PC-9 (cell line): ENCODE measurements at regions of chr11 and their contacts with region 1.

Region 1: GRCh38 chr11:86021377-86021776 is 47.5 kb downstream of the PICALM start:
- DNase-seq: no peak
- H3K4me3 ChIP-seq: no peak overlapping the region
- H3K27ac ChIP-seq: no peak overlapping the region
- H3K4me1 ChIP-seq: no peaks in the 10 kb centered on the region
- H3K27me3 ChIP-seq: no peaks in the 10 kb centered on the region
- CTCF ChIP-seq: no peak

Region 2: DNA sequence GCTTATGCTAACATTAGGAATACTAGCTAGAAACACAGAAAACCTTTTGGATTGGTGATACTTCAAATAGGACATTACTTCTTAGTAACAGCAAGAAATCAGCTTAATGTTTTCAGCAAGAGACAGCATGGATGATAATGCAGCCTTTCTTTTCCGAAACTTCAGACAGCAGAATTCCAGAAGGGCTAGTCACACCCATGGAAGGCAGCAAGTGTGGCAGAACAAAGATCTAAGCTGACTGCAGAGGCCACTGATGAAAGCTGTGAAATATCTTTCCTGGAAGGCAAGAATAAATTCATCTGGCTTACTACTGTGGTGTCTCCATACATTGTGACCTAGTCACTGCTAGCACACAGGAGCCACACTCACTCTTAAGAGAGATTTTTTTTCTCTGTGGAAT is 65.8 kb before region 1 on chr11:
- CTCF ChIA-PET with region 1: no interaction called
- POLR2A ChIA-PET with region 1: no interaction called
- intact Hi-C with region 1: loop called (anchors 5 kb)
- DNase-seq: no peak
- H3K4me3 ChIP-seq: no peak overlapping the region
- H3K27ac ChIP-seq: no peak overlapping the region
- H3K4me1 ChIP-seq: no peaks in the 10 kb centered on the region
- H3K27me3 ChIP-seq: no peaks in the 10 kb centered on the region
- CTCF ChIP-seq: no peak